Ovary (tissue), 10 donors: ENCODE measurements at regions of chr9 and their contacts with region 1.

Region 1: GRCh38 chr9:34178520-34179212 is at the start of gene UBAP1:
- DNase-seq: peak; percentile 96 to 98 (median 97)
- H3K4me3 ChIP-seq: peak within 1 kb of the TSS; percentile 75
- H3K27ac ChIP-seq: peak within 1 kb of the TSS; percentile 88 to 98
- H3K4me1 ChIP-seq: peaks cover 3% of the 10 kb centered on the region
- H3K27me3 ChIP-seq: no peaks in the 10 kb centered on the region
- CTCF ChIP-seq: peak in 1 of 3 donors; percentile 6
- EP300 ChIP-seq: no peak
- POLR2A ChIP-seq: peak; percentile 96
- total RNA-seq, gene UBAP1: 25.8 to 52.8 (median 44.8) TPM

Region 2: GRCh38 chr9:34126207-34127034 is 52.2 kb before region 1 on chr9 and contains the start of gene DCAF12:
- intact Hi-C with region 1: loop called in 1 of 4 experiments (anchors 5 kb)
- DNase-seq: peak; percentile 90 to 94 (median 92)
- H3K4me3 ChIP-seq: peak within 1 kb of the TSS; percentile 86
- H3K27ac ChIP-seq: peak within 1 kb of the TSS; percentile 74 to 81
- H3K4me1 ChIP-seq: peaks cover 10% of the 10 kb centered on the region
- H3K27me3 ChIP-seq: no peaks in the 10 kb centered on the region
- CTCF ChIP-seq: no peak
- EP300 ChIP-seq: no peak
- POLR2A ChIP-seq: peak; percentile 67
- total RNA-seq, gene DCAF12: 18.0 to 35.0 (median 24.8) TPM

Region 3: GRCh38 chr9:34139477-34140146 is 39.1 kb before region 1 on chr9:
- intact Hi-C with region 1: loop called in 1 of 4 experiments (anchors 5 kb)
- DNase-seq: peak; percentile 40 to 72 (median 63)
- H3K4me3 ChIP-seq: no peak overlapping the region
- H3K27ac ChIP-seq: no peak overlapping the region
- H3K4me1 ChIP-seq: peaks cover 6% of the 10 kb centered on the region
- H3K27me3 ChIP-seq: no peaks in the 10 kb centered on the region
- CTCF ChIP-seq: no peak
- EP300 ChIP-seq: no peak
- POLR2A ChIP-seq: no peak